Sciatic nerve (tissue), 2 donors: ENCODE measurements at regions of chr6 and their contacts with region 1.

Region 1: DNA sequence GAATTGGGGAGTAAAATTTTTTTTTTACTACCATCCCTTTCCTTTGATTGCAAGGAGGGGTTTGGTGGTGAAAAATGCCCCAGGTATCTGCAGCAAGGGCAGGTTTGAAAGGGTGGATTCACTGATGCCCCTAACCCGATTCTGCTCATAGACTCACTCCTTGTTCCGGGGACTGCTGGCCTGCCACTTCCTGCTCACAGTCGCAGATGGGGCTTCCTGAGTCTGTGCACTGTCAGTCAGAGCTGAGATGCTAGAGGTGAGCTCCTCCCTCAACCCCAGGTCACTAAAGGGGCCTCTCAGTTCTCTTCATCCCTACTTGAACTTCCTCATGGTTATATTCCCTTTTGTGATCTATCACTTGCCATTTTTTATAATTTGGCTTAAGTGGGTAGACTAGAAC is 357.9 kb downstream of the FARS2 start:
- DNase-seq: no peak
- ATAC-seq: no peak

Region 2: GRCh38 chr6:4403828-4404227 is 1215.4 kb before region 1 on chr6:
- intact Hi-C with region 1: no loop called
- DNase-seq: no peak
- ATAC-seq: peak; percentile 64

Region 3: GRCh38 chr6:5181506-5182287 is 437.6 kb before region 1 on chr6:
- intact Hi-C with region 1: no loop called
- DNase-seq: no peak
- ATAC-seq: no peak

Region 4: GRCh38 chr6:7439228-7439627 is 1820.0 kb after region 1 on chr6:
- intact Hi-C with region 1: loop called (anchors 5 kb)
- DNase-seq: no peak
- ATAC-seq: no peak